ENCODE measurements at regions of chr10 and their contacts with region 1.

Region 1: GRCh38 chr10:24952707-24953645 is 570 bp upstream of the PRTFDC1 start:
- DNase-seq: peak; percentile 48
- ATAC-seq: peak; percentile 86
- H3K4me3 Mint-ChIP-seq: peak overlapping the region; percentile 76
- H3K27ac Mint-ChIP-seq: peak overlapping the region; percentile 51
- H3K4me1 Mint-ChIP-seq: peaks cover 7% of the 10 kb centered on the region
- H3K27me3 Mint-ChIP-seq: peaks cover 15% of the 10 kb centered on the region
- CTCF ChIP-seq: no peak

Region 2: GRCh38 chr10:24834307-24835162 is 118.4 kb before region 1 on chr10:
- CTCF ChIA-PET with region 1: no interaction called
- POLR2A ChIA-PET with region 1: no interaction called
- intact Hi-C with region 1: no loop called
- DNase-seq: no peak
- ATAC-seq: no peak
- H3K4me3 Mint-ChIP-seq: no peak overlapping the region
- H3K27ac Mint-ChIP-seq: no peak overlapping the region
- H3K4me1 Mint-ChIP-seq: no peaks in the 10 kb centered on the region
- H3K27me3 Mint-ChIP-seq: no peaks in the 10 kb centered on the region
- CTCF ChIP-seq: no peak

Region 3: DNA sequence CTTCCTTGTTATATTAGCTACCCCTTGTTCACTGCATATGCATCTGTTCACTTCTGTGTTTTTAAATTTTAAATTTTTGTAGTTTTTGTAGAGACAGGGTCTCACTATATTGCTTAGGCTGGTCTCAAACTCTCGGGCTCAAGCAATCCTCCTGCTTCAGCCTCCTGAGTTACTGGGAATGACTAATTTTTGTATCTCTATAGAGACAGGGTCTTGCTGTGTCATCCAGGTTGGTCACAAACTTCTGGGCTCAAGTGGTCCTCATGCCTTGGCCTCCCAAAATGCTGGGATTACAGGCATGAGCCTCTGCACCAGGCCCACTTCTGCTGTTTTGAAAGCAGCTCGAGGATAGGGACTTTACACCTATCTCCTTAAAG is 65.1 kb before region 1 on chr10:
- CTCF ChIA-PET with region 1: no interaction called
- POLR2A ChIA-PET with region 1: no interaction called
- intact Hi-C with region 1: loop called (anchors 5 kb)
- DNase-seq: no peak
- ATAC-seq: peak; percentile 15
- H3K4me3 Mint-ChIP-seq: peak overlapping the region; percentile 61
- H3K27ac Mint-ChIP-seq: peak overlapping the region; percentile 93
- H3K4me1 Mint-ChIP-seq: peaks cover 34% of the 10 kb centered on the region
- H3K27me3 Mint-ChIP-seq: no peaks in the 10 kb centered on the region
- CTCF ChIP-seq: no peak

Region 4: DNA sequence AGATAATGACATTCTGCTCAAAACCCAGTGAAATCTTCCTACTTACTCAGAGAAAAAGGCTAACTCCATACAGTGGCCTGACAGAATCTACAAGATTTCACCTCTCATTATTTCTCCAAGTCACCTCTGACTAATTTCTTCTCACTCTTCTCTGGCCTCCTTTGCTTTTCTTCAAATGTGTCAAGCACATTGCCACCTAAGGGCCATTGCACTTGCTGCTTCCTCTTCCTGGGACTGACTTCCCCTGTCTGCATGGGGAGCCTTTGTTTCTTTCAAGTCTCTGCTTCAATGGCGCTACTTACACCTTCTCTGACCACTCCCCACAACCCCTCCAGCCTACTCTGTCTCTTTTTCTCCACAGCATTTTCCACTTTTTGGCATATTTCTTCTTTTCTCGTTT is 36.6 kb before region 1 on chr10:
- CTCF ChIA-PET with region 1: no interaction called
- POLR2A ChIA-PET with region 1: no interaction called
- intact Hi-C with region 1: loop called (anchors 5 kb)
- DNase-seq: no peak
- ATAC-seq: no peak
- H3K4me3 Mint-ChIP-seq: no peak overlapping the region
- H3K27ac Mint-ChIP-seq: no peak overlapping the region
- H3K4me1 Mint-ChIP-seq: peaks cover 13% of the 10 kb centered on the region
- H3K27me3 Mint-ChIP-seq: no peaks in the 10 kb centered on the region
- CTCF ChIP-seq: no peak

Region 5: DNA sequence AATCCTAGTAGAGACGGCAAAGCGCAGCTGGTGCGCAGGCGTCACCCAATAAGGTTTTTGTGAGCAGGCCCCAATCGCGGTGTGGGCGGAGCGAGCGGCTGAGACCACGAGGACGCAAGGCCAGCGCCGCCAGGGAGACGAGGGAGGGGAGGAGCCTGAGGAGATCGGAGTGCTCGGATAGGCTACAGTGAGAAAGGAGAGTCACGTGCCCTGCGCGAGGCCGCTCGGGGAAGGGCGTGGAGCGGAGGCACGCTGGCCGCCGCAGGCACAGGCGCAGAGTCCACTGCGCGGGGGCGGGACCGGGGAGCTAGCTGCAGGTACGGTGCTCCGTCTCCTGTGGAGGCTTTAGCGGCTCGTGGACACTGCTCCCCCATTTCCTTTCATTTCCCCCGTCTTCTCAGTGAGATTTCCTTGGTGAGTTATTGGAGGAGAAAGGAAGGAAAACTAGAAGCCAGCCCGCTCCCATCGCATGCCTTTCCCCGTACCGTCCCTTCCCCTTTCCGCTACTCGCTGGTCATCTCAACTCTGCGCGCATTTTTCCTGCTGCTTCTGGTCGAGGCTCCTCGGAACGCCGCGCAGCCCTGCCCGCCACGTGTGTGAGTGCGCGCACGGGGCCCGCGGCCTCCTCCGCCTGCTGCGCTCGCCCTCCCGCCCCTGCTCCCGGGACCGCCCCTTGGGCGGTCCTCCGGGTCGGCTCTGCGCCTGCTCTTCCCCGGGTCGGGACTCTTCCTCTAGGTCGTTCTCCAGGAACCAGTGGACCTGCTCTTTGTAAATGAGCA is 63.6 kb after region 1 on chr10 and contains the start of gene THNSL1:
- CTCF ChIA-PET with region 1: no interaction called
- POLR2A ChIA-PET with region 1: no interaction called
- intact Hi-C with region 1: loop called (anchors 2 kb)
- DNase-seq: peak; percentile 85
- ATAC-seq: peak; percentile 95
- H3K4me3 Mint-ChIP-seq: peak within 1 kb of the TSS; percentile 88
- H3K27ac Mint-ChIP-seq: peak within 1 kb of the TSS; percentile 93
- H3K4me1 Mint-ChIP-seq: peaks cover 27% of the 10 kb centered on the region
- H3K27me3 Mint-ChIP-seq: no peaks in the 10 kb centered on the region
- CTCF ChIP-seq: no peak
- total RNA-seq, gene THNSL1: 3.8 TPM in 2 replicates

Region 6: DNA sequence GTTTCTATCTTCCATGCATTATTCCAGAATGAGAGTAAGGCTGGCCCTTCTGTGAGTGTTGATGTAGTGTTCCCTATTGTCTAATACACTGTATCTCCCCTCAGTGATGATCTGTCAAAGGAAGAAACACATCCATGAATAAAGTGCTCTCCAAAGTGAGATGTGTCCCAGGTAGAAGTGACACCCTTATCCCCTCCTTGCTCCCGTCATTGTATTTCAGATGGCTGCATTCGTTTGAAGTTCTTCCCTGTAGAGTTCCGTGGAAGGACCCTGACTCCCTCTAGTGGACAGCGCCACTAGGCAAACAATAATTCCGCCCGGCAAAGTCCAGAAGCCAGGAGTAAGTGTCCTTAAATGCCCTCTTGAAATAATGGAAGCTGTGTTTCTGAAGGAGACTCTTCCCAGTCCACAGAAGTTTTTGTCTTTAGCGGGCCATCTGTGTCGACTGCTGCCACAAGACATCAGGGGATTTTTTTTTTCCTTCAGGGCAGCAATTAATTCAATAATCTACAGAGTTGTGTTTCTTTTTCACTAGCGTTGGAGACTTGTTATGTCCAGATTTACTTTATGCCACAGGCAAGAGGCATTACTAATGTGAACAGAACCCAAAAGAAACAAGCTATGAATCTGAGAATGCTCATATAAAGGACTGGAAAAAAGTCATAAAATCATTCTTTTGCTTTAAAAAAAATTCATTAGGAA is 128.1 kb after region 1 on chr10:
- CTCF ChIA-PET with region 1: no interaction called
- POLR2A ChIA-PET with region 1: no interaction called
- intact Hi-C with region 1: loop called (anchors 1 kb)
- DNase-seq: peak; percentile 33
- ATAC-seq: peak; percentile 28
- H3K4me3 Mint-ChIP-seq: no peak overlapping the region
- H3K27ac Mint-ChIP-seq: no peak overlapping the region
- H3K4me1 Mint-ChIP-seq: no peaks in the 10 kb centered on the region
- H3K27me3 Mint-ChIP-seq: peaks cover 13% of the 10 kb centered on the region
- CTCF ChIP-seq: no peak